HEK293T (cell line): ENCODE measurements at regions of chr10 and their contacts with region 1.

Region 1: GRCh38 chr10:119588071-119588470 is 8.7 kb downstream of the TIAL1 start:
- DNase-seq: no peak

Region 2: DNA sequence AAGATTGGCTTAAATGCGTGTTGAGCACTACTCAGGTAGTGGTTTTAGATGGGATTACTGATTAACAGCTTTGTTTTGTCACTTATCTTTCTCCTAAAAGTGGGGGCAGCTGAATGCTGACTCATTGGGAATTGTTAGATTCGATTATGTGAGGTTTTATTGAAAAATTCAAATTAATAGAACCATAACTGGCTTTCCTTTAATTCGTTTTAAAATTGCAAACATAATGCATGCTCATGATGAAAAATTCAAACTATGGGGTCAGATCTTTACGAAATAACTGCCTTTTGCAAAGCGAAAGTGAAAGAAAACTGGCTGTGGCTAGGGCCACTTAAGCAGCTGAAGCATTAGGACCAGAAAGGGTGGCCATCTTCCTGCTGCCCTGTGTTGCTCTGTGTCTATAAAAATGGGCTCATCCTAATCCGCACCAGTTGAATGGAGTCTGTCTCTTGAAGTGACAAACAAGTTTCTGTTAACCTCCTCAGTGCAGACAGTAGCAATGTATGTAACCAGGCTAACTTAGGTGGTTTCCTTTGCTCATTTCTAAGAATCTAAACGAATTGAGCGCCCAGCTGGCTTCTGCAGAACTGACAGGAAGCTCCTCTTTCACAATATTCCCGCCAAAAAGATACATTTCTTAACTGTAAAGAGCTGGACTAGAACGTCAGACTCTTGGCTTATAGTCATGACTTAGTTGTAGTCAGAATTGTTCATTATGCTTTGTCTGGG is 456.4 kb before region 1 on chr10:
- CTCF ChIA-PET with region 1: no interaction called
- POLR2A ChIA-PET with region 1: no interaction called
- DNase-seq: no peak

Region 3: DNA sequence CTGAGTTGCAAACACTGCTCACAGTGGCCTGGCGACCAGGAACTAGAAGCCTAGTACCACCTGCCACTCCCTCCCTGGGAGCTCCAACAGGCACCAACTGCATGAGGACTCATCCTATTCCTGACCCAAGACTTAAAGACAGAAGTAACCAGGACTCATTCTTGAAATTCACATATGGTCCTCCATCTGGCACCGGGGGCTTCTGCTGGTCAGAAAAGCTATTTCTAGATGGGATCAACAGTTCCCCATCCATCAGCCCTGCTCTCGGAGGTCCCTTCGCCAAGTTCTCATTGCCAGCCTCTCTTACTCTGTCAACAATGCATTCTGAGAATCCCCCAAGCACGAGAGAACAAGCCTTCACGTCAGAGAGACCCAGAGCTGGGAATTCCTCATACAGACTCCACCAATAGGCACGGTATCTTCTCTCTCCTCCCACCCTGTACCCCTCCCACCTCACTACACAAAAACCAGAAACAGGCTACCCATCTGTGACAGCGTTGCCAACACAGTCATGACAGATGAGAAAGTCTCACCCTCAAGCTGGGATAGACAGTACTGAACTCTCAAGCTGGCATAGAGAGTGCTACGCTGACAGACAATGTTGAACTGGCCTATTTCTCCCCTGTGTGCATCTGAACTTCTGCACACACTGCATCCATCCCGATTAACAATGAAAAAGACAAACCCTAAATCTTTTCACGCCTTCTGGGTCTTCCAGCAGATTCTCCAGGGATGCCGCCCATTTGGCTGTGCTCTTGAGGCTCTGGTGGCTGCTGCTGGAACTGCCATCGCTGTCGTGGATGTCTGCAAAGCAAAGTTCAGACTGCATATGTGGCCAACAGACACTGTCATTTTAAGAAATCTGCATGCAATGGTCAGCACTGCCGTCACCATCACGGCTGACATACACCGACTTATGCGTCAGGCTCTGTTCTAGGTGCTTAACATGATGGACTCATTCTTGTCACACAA is 61.2 kb before region 1 on chr10:
- CTCF ChIA-PET with region 1: interaction called, 10 read pairs
- POLR2A ChIA-PET with region 1: no interaction called
- DNase-seq: peak; percentile 45

Region 4: DNA sequence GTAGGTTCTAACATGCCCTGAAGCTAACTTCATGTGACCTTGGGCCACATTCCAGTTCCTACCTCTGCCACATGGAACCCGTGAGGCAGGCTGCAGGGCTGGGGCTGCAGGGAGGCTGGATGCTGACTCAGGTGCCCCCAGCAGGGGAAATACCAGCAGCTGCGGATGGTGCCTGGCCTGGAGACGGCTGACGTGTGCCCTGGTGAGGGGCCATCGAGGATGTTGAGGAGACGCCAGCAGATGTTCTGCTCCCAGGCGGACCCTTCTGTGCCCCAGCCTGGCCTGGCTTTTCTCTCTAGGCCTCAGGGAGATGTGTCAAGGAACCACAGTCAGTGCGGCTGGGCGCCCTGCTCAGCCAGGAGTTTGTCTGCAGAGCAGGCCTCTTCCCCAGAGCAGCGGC is 71.9 kb after region 1 on chr10:
- CTCF ChIA-PET with region 1: no interaction called
- POLR2A ChIA-PET with region 1: no interaction called
- DNase-seq: no peak

Region 5: GRCh38 chr10:119769886-119770285 is 181.8 kb after region 1 on chr10:
- CTCF ChIA-PET with region 1: no interaction called
- POLR2A ChIA-PET with region 1: no interaction called
- DNase-seq: no peak